ENCODE measurements at regions of chr10 and their contacts with region 1.

Region 1: DNA sequence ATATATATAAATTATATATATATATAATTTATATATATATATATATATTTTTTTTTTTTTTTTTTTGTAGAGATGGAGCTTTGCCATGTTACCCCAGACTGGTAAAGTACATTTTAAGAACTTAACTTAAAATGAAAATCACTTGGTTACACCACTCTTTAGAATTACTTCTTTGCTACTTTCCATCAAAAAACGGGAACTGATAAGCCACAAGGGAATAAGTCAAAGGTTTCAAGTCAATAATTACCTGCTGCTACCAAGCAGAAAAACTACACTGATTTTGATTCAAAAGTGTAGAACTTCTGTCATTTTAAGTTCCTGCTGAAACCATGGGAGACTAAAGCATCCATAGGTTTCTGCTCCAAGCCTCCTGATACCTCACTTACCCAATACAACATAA is 12.2 kb downstream of the PPA1 start:
- DNase-seq: no peak
- H3K4me3 ChIP-seq: peak overlapping the region in 2 of 4 donors; percentile 5 to 23
- H3K27ac ChIP-seq: peak overlapping the region; percentile 25 to 51 (median 36)
- H3K4me1 ChIP-seq: peaks cover 7 to 17% (median 12%) of the 10 kb centered on the region in 4 donors
- H3K27me3 ChIP-seq: no peaks in the 10 kb centered on the region
- CTCF ChIP-seq: no peak
- EP300 ChIP-seq: no peak
- POLR2A ChIP-seq: no peak

Region 2: DNA sequence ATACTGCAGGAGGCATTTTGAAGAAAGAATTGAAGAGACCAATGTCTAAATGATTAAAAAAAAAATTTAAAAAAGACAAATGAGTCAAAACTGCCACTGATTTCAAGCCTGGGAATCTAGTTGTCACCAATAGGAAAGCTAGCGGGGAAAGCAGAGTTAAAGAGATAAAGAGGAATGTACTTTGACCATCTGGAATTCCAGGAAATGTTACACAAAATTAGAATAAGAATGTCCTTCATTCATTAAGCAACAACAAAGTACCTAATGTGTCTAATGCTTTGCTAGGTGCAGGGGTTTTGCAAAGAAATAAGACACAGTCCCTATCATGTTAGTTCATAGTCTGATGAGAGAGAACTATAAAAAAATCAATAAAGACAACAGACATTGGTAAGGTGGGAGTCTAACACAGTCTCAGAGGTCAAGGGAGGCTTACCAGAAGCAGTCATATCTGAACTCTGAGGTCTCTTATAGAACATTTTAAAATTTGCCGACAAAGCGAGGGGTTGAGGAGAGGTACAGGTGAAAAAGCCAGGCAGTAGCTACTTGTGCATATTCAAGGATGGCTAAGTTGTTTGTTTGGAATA is 65.7 kb before region 1 on chr10:
- intact Hi-C with region 1: no loop called
- DNase-seq: no peak
- H3K4me3 ChIP-seq: no peak overlapping the region
- H3K27ac ChIP-seq: no peak overlapping the region
- H3K4me1 ChIP-seq: no peaks in the 10 kb centered on the region
- H3K27me3 ChIP-seq: no peaks in the 10 kb centered on the region
- CTCF ChIP-seq: no peak
- EP300 ChIP-seq: no peak
- POLR2A ChIP-seq: no peak

Region 3: DNA sequence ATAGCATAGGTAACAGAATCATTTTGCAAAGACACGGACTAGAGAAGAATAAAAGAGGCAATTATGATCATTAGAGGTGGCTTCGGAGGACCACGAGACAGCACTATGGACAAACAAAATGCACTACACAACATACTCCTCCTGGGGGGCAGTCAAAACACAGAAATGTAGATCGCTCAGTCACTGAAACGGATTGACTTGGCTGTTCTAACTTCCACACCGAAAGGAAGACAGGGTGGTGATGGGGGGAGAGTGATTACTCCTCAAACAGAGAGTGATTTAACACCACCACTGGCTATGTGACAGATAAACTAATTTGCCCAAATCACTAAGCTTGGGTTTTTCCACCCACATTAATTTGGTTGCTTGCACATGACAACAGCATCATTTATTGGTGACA is 26.3 kb after region 1 on chr10:
- intact Hi-C with region 1: loop called (anchors 1 kb)
- DNase-seq: no peak
- H3K4me3 ChIP-seq: no peak overlapping the region
- H3K27ac ChIP-seq: no peak overlapping the region
- H3K4me1 ChIP-seq: no peaks in the 10 kb centered on the region
- H3K27me3 ChIP-seq: peaks cover 0 to 5% (median 0%) of the 10 kb centered on the region in 4 donors
- CTCF ChIP-seq: no peak
- EP300 ChIP-seq: no peak
- POLR2A ChIP-seq: no peak

Region 4: DNA sequence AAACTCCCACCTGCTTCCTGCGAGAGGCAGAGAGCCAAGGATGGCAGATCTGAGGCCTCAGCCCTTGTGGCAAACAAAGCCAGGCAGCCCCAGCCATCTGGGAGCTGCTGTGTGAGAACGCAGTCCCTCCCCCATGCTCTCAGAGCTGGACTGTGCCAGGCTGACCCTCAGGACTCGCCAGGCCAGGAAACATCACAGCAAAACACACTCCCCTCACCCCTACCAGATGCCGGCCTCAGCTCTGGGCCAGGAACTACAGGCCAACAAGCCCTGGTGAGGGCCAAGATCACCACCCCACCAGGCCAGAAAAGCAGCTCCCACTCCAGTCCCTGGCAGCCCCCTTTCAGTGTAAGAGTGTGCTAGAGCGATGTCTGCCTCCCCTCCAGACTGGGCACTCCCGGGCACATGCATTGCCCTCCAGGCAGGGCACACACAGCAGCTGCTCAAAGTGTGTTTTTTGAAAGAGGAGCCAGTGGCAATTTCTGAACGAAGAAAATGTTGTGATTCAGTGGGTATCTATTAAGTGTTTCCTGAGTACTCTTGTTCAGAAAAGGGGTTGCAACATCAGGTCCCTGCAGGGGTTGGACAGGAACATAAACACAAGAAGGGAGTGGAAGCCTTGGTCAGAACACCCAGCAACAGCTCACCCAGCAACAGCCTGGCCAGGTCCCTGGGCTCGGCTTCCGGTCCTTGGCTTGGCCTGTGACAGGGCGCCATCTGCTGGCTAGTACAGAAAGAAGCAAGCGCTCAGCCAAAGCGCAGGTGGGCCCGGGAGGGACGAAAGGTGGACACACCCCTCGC is 143.1 kb after region 1 on chr10:
- intact Hi-C with region 1: loop called (anchors 1 kb)
- DNase-seq: peak; percentile 98
- H3K4me3 ChIP-seq: peak overlapping the region; percentile 24 to 40 (median 26)
- H3K27ac ChIP-seq: peak overlapping the region; percentile 80 to 87 (median 87)
- H3K4me1 ChIP-seq: peaks cover 12 to 36% (median 32%) of the 10 kb centered on the region in 4 donors
- H3K27me3 ChIP-seq: no peaks in the 10 kb centered on the region
- CTCF ChIP-seq: peak; percentile 89 to 95 (median 92)
- EP300 ChIP-seq: no peak
- POLR2A ChIP-seq: no peak

Measured in esophagus muscularis mucosa (tissue), 4 donors.